Activated CD8-positive, alpha-beta T cell treated with anti-CD3 and anti-CD28 coated beads for 36 hours (primary cell): ENCODE measurements at regions of chr16 and their contacts with region 1.

Region 1: DNA sequence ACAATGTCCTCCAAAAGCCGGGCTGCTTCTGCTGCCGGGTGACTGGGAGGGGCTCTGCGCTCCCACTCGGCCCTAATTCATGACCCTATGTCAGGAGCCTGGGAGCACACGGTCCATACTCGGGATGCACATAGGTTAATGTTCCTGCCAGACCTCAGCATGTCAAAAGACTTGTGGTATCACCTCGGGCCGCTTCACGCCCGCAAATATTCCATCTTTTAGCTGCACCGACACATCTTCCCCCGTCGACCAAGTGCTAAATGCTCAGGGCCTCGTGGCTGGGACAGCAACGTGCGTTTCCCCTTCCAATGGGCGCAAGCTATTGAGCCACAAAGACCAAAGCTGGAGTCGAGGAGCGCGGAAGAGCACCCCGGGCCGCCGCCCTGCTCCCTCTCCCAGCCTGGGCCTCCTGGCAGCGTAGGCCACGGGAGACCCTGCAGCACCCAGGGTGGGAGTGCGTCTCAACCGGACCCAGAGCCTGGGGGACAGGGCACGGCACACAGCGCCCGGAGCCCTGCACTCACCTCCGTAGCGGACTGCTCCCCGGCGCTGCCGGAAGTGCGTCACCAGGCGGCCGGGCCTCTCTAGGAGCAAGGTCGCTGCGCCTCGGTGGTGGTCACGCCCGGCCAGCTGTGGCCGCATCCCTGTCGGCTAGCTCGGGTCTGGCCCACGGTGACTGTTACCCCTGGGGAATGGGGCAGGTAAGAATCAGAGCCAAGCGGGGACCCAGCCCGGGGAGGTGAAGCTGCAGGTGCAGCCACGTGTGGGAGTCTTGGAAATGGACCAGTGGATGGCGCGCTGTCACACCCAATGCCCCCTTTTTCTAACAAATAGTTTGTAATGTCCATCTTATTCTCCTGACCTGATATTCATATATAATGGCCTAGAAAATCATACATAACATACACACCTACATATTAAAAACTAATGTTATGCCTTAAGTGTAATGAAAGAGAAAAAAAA is at the start of gene ZNF23:
- DNase-seq: peak; percentile 80
- ATAC-seq: peak; percentile 99
- H3K4me3 Mint-ChIP-seq: peak within 1 kb of the TSS; percentile 80
- H3K27ac Mint-ChIP-seq: peak within 1 kb of the TSS; percentile 94
- H3K4me1 Mint-ChIP-seq: peaks cover 22% of the 10 kb centered on the region
- H3K27me3 Mint-ChIP-seq: no peaks in the 10 kb centered on the region
- CTCF ChIP-seq: peak; percentile 32
- total RNA-seq, gene ZNF23: 10.4 to 11.1 TPM

Region 2: DNA sequence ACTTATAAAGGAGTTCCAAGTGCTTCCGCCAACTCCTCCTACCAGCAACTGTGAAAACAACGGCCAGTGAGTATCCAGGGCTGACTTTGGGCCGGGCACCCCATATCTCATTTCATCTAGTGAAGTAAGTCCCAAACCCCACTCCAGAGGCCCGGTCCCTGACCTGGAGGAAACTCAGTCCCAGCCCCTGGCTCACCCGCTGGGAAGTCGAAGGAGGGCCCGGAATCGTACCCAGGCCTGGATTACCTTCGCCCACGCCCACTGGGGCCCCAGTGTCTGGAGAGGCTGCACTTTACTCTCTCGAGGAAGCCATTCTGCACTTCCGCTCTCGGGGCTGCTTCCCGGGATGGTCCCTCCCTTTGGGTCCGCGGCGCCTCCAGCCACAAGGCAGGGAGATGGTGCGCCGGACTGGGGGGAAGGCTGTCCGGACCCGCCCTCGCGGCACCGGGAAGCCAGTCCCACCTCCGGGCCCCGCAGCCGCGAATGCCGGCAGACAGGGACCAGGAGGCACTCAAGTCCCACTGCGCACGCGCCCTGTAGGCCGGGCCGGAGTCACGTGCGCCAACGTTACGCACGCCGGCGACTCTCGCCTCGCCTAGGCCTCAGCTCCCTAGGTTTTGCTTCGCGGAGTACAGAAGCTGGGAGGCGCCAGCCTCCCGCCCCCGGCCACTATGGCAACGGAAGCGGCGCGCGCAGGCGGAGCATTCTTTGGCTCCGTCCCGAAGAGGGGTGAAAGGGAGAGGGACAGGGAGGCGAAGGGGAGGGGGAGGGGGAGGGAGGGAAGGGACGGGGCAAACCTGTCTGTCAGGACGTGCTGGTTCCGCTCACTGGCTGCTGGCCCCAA is 172.9 kb before region 1 on chr16 and contains the start of gene CMTR2:
- CTCF ChIA-PET with region 1: no interaction called
- POLR2A ChIA-PET with region 1: no interaction called
- intact Hi-C with region 1: no loop called
- DNase-seq: peak; percentile 93
- ATAC-seq: peak; percentile 97
- H3K4me3 Mint-ChIP-seq: peak within 1 kb of the TSS; percentile 90
- H3K27ac Mint-ChIP-seq: peak within 1 kb of the TSS; percentile 93
- H3K4me1 Mint-ChIP-seq: peaks cover 14% of the 10 kb centered on the region
- H3K27me3 Mint-ChIP-seq: peaks cover 18% of the 10 kb centered on the region
- CTCF ChIP-seq: no peak
- total RNA-seq, gene CMTR2: 16.6 to 19.3 TPM

Region 3: DNA sequence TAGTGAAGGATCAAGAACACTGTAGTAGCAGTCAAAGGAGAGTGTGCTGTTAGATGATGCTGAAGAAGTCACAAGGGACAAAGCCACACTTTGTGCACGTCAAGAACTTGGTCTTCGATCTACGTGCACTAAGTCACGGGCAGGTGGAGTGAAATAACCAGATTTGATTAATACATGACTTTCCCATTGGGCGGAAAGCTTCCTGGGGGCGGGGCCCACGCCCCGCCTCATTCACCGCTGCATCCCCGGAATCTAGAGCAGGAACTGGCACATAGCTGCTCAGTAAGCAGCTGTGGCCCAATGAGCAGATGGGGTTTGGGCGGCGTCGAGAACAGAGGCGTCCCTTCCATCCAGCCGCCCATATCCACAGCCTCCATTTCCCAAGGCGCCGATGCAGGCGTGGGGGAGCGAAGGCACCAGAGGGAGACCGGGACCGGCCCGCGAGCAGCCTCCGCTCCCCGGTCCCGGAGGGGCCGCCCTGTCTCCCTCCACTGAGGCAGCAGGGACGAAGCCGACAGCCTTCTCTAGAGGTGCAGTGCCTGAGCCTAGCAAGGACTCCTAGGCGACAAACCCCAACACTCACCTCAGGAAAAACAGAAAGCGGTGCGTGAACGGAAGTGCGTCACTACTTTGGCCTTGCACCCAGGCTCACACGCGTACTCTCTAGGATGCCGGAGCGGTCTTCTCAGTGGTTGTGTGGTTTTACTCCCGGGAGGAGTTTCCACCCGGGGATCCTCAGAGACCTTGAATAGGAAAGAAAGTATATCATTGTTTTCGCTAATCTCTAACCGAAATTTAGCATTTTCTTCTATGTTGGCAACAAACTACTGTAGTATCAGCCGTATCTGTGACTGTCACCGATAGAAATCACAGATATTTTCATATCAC is 22.3 kb after region 1 on chr16:
- CTCF ChIA-PET with region 1: interaction called, 7 read pairs
- POLR2A ChIA-PET with region 1: interaction called, 17 read pairs
- intact Hi-C with region 1: loop called (anchors 1 kb)
- DNase-seq: peak; percentile 93
- ATAC-seq: peak; percentile 90
- H3K4me3 Mint-ChIP-seq: peak overlapping the region; percentile 76
- H3K27ac Mint-ChIP-seq: peak overlapping the region; percentile 79
- H3K4me1 Mint-ChIP-seq: peaks cover 13% of the 10 kb centered on the region
- H3K27me3 Mint-ChIP-seq: no peaks in the 10 kb centered on the region
- CTCF ChIP-seq: no peak